GM23248 (cell line): ENCODE measurements at regions of chr12 and their contacts with region 1.

Region 1: GRCh38 chr12:68871921-68872320 is 61.0 kb downstream of the CPM start:
- DNase-seq: peak; percentile 22
- H3K4me3 ChIP-seq: no peak overlapping the region
- H3K27ac ChIP-seq: no peak overlapping the region
- H3K4me1 ChIP-seq: no peaks in the 10 kb centered on the region
- H3K27me3 ChIP-seq: no peaks in the 10 kb centered on the region

Region 2: GRCh38 chr12:68919581-68920239 is 47.8 kb after region 1 on chr12:
- in situ Hi-C with region 1: no loop called
- DNase-seq: no peak
- H3K4me3 ChIP-seq: no peak overlapping the region
- H3K27ac ChIP-seq: no peak overlapping the region
- H3K4me1 ChIP-seq: peaks cover 9% of the 10 kb centered on the region
- H3K27me3 ChIP-seq: no peaks in the 10 kb centered on the region

Region 3: DNA sequence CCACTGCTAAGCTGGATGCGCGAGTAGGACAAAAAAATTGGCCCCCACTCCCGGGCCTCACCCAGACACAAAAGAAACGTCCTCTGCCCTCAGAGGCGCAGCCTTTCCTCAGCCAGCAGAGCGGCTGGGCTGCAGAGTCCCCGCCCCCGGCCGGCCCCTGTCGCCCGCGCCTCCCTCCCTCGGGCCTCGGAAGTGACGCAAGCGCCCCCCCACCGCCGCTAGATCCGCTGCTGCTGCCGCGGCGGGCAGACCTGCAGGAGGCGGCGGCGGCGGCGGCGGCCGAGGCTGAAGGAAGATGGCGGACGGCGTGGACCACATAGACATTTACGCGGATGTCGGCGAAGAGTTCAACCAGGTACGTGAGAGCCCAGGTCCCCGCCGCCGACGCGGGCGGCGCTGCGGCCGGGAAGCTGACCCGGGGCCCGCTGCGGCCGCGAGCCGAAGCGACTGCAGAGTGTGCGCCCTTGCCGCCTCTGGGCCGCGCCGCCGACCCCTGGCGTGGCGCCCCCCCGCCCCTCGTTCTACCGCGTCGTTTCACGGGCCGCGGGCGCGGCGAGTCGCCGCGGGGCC is 367.5 kb after region 1 on chr12 and contains the start of gene CPSF6:
- in situ Hi-C with region 1: loop called (anchors 25 kb)
- DNase-seq: peak; percentile 98
- H3K4me3 ChIP-seq: peak within 1 kb of the TSS; percentile 87
- H3K27ac ChIP-seq: peak within 1 kb of the TSS; percentile 84
- H3K4me1 ChIP-seq: peaks cover 17% of the 10 kb centered on the region
- H3K27me3 ChIP-seq: no peaks in the 10 kb centered on the region
- total RNA-seq, gene CPSF6: 19.6 and 31.5 TPM in 2 replicates

Region 4: DNA sequence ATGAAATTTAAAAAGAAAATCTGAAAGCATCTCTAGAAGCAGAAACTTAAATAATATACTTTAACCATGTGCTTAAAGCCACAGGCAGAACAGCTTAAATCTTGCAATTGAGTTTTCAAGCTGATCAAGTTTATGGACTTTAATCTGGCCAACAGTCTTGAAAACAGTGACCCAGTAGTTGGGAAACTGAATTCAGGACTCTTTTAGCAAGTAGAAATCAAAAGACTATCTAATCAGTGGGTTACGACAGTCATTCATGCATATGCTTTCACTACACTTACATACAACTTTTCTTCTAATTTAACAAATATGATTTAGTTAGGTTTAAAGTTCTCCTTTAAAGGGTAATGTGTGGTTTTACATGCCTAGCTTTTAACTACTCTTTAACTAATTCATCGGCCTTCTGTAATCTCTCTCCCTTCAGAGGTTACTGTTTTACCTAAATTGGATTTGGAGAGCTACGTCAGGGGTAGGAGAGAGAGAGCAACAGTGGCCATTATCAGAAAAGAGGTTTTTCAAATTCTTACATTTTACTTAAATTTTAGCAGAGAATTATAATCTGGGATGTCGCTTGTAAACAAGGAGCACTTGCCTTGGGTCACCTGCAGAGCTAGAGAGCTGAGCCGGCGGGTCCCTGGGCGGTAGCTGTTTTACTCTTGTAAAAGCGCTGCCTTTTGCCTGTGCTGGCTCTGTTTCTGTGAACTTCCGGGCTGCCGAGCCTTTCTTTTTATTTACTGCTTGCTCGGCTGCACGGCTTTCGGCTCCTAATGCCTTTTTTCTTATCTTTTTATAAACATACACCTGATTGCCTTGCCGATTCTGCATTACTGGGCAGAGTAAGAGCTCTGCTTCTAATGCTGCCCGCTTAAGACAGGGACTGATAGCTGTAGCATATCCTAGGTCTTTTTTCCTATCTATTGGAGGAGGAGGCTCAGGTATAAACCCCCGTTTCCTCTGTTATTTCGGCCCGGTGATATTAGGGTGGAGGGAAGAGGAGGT is 458.9 kb after region 1 on chr12:
- in situ Hi-C with region 1: no loop called
- DNase-seq: peak; percentile 28
- H3K4me3 ChIP-seq: peak overlapping the region; percentile 62
- H3K27ac ChIP-seq: no peak overlapping the region
- H3K4me1 ChIP-seq: no peaks in the 10 kb centered on the region
- H3K27me3 ChIP-seq: peaks cover 52% of the 10 kb centered on the region